ENCODE measurements at regions of chr22 and their contacts with region 1.

Region 1: DNA sequence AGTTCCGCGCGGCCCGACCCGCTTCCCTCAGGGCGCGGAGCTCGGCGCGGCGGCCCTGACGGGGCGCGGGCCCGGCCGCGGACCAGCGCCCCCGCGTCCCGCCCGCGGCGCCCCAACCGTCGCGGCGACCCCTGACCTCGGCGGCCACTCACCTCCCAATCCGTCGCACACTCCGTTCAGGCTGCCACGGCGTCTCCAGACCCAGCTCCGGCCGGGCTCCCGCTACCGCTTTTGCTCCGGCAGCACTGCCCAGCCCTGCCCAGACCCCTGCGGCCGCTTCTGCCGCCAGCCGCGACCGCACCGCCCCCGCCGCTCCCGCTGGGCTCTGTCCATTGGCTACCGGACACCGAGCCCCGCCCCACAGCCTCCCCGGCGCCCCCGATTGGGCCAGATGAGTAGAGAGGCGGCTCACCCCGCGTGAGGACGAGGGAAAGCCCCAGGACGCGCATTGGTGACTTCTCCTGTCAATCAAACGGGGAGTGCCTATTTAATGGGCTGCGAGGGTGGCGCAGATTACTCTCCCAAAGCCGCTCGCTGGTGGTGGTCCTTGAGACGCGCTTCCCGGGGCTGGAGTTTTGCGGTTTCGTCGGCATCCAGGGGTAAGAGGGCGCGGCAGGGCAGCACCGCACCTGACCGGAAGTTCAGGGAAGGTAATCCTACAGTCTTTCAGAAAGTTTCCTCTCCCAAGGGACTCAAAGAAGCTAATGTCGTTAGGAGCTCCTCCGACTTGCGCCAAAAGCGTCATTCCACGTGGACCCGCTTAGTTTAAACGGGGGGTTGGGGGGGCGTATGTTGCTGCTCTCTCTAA is at the start of gene PACSIN2:
- DNase-seq: peak; percentile 97
- ATAC-seq: peak; percentile 99
- H3K4me3 ChIP-seq: peak within 1 kb of the TSS; percentile 97
- H3K27ac ChIP-seq: peak within 1 kb of the TSS; percentile 48
- H3K4me1 ChIP-seq: peaks cover 9% of the 10 kb centered on the region
- H3K27me3 ChIP-seq: no peaks in the 10 kb centered on the region
- CTCF ChIP-seq: no peak
- POLR2A ChIP-seq: peak; percentile 98
- RAD21 ChIP-seq: no peak
- total RNA-seq, gene PACSIN2: 98.0 and 118 TPM in 2 replicates

Region 2: DNA sequence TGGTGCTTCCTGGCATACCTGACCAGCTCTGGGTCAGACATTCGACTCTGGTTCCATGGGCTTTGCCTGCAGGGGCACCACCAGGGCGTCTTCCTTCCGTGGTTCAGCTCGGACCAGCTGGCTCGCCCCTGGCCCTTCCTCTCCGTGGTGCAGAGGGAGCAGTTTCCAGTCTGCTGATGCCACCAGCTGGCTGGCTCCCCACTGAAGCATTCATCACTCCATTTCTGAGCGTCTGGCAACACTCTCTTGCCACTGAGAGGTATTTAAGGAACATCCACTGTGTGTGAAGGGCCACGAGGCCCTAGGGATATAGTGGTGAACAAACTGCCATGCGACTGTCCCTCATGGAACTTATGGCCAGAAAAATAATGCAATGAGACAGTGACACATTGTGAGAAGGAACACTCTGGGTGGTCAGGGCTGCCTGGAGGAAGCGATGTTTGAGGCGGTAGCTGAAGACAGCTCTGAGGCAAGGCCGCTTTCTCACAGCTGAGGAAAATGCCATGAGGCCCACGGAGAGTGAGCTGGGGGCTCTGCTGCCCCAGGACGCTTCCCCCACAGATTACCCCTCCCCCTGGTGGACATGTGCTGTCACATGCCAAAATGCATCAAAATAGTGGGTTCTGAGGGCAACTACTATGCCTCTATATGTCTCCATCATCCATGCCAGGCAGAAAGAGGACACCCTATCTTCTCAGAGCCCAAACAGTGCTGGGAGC is 113.1 kb before region 1 on chr22:
- CTCF ChIA-PET with region 1: no interaction called
- POLR2A ChIA-PET with region 1: no interaction called
- dilution Hi-C with region 1: no loop called
- in situ Hi-C with region 1: no loop called
- intact Hi-C with region 1: loop called (anchors 5 kb)
- DNase-seq: no peak
- ATAC-seq: no peak
- H3K4me3 ChIP-seq: no peak overlapping the region
- H3K27ac ChIP-seq: no peak overlapping the region
- H3K4me1 ChIP-seq: peaks cover 10% of the 10 kb centered on the region
- H3K27me3 ChIP-seq: no peaks in the 10 kb centered on the region
- CTCF ChIP-seq: no peak
- POLR2A ChIP-seq: no peak
- RAD21 ChIP-seq: no peak

Region 3: GRCh38 chr22:42933481-42934091 is 81.5 kb before region 1 on chr22:
- CTCF ChIA-PET with region 1: no interaction called
- POLR2A ChIA-PET with region 1: no interaction called
- dilution Hi-C with region 1: no loop called
- in situ Hi-C with region 1: no loop called
- intact Hi-C with region 1: loop called (anchors 5 kb)
- DNase-seq: peak; percentile 97
- ATAC-seq: peak; percentile 84
- H3K4me3 ChIP-seq: no peak overlapping the region
- H3K27ac ChIP-seq: peak overlapping the region; percentile 68
- H3K4me1 ChIP-seq: peaks cover 48% of the 10 kb centered on the region
- H3K27me3 ChIP-seq: no peaks in the 10 kb centered on the region
- CTCF ChIP-seq: no peak
- POLR2A ChIP-seq: peak; percentile 15; the same call in 1 of the 2 replicates
- RAD21 ChIP-seq: 0 out of 2 replicates have a peak, but pooled peaks have one; percentile 1

Region 4: DNA sequence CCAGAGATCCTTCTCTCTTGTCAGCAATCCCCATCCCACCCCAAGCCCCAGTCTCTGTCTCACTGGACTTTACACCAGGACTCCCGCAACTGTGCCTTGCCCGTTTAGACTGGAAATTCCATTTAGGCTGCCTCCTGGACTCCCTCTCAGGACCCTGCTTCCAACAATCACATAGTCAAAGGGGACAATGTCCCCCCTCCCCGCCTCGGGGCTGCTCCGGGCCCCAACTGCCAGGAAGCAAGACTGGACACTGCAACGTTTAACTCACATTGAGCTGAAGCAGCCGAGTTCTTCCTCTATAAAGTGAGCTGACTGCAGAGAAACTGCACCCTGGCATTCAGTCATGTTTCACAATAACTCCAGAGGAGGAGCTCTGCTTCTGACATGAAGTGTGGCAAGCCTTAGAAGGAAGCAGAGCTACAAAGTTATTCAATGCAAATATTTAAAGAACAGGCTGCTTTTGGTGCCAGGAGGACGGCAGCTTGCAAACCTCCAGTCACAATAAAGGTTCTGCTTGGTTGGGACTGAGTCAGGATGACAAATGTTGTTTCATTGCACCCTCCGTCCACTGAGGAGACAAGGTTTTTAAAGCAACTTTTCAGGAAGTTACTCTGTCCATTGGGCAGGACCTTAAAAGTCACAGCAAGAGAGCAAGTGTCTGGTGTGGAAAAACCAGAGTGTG is 20.1 kb before region 1 on chr22:
- CTCF ChIA-PET with region 1: interaction called, 3 read pairs
- POLR2A ChIA-PET with region 1: interaction called, 4 read pairs
- dilution Hi-C with region 1: no loop called
- in situ Hi-C with region 1: no loop called
- intact Hi-C with region 1: loop called (anchors 2 kb)
- DNase-seq: peak; percentile 94
- ATAC-seq: peak; percentile 72
- H3K4me3 ChIP-seq: peak overlapping the region; percentile 29; the same call in 1 of the 2 replicates
- H3K27ac ChIP-seq: peak overlapping the region; percentile 98
- H3K4me1 ChIP-seq: peaks cover 41% of the 10 kb centered on the region
- H3K27me3 ChIP-seq: no peaks in the 10 kb centered on the region
- CTCF ChIP-seq: no peak
- POLR2A ChIP-seq: peak; percentile 57
- RAD21 ChIP-seq: no peak

Measured in IMR-90 (cell line).